ENCODE measurements at regions of chr22 and their contacts with region 1.

Region 1: GRCh38 chr22:35350539-35351503 is 30.1 kb upstream of the HMOX1 start:
- DNase-seq: peak; percentile 93
- CTCF ChIP-seq: peak; percentile 90

Region 2: DNA sequence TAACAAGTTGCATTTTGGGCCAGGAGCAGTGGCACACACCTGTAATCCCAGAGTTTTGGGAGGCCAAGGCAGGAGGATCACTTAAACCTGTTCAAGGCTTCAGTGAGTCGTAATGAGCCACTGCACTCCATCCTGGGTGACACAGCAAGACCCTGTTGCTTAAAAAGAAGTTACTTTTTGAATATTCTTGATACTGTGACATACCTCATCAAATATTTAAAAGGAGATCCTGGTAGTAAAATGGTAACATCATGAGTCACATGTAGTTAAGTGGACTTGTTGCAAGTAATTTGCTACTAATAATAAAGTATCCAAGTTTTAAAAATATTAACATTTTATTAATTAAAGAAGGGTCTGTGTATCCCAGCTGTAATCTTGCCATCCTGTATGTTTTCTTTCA is 75.2 kb before region 1 on chr22:
- CTCF ChIA-PET with region 1: no interaction called
- POLR2A ChIA-PET with region 1: no interaction called
- DNase-seq: no peak
- CTCF ChIP-seq: no peak

Region 3: DNA sequence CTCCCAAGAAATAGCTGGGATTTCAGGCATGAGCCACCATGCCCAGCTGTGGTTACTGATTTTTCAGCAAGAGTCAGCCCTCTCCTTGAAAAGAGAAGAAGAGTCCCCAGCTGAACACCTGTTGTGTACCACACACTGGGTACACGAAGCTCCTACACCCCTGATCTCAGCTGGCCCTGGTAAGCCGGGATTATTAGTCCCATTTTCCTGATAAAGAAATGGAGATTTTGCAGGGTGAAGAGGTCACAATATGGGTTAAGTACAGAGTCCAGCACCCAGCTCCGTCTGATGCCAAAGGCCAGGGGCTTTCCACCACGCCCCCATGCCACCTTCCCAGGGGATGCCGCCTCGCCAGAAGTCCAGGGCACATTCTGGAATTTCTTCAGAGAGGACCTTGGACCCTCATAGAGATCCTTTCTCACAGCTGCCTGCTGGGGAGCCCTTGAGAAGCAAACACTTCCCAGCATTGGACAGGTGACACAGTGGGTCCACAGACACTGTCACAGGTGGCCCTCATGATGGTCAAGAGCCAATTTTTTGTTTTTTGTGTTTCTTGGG is 10.3 kb after region 1 on chr22:
- CTCF ChIA-PET with region 1: interaction called, 13 read pairs
- POLR2A ChIA-PET with region 1: no interaction called
- DNase-seq: no peak
- CTCF ChIP-seq: no peak

Region 4: DNA sequence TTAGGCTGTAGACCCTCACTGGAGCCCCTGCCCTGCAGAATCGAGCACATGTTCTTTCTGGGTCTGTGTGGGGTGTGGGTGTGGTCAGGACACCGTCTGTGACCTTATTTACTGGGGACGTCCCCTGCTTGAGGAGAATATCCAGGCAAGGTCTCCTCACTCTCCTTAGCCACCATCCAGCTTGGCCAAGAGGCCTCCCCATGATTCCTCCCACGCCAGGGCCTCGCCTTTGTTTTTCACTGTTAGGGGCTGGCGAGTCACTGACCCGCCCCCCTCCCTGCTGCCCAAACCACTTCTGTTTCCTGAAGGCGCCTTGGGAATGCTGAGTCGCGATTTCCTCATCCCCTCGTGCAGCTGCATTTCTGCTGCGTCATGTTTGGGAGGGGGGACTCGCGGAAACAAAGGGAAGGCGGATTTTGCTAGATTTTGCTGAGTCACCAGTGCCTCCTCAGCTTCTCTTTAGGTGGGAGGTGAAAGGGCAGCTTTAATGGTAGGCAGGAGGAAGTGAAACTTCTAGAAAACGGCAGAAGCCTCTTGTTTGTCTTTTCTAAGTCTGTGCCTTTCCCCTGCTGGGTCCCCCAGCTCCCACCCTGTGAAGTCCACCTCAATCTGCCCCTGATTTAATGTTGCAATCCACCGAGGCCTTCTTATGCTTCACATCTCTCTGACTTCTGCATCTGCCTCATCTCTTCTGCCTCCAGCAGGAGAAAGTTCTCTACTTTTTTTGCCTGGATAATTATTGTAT is 26.1 kb after region 1 on chr22:
- CTCF ChIA-PET with region 1: interaction called, 10 read pairs
- POLR2A ChIA-PET with region 1: no interaction called
- DNase-seq: peak; percentile 81
- CTCF ChIP-seq: no peak

Region 5: GRCh38 chr22:35409783-35410662 is 59.2 kb after region 1 on chr22:
- CTCF ChIA-PET with region 1: interaction called, 47 read pairs
- POLR2A ChIA-PET with region 1: no interaction called
- DNase-seq: peak; percentile 86
- CTCF ChIP-seq: no peak

Region 6: GRCh38 chr22:35442471-35442870 is 91.7 kb after region 1 on chr22:
- CTCF ChIA-PET with region 1: no interaction called
- POLR2A ChIA-PET with region 1: no interaction called
- DNase-seq: no peak
- CTCF ChIP-seq: no peak

Region 7: GRCh38 chr22:35575116-35575748 is 224.4 kb after region 1 on chr22:
- CTCF ChIA-PET with region 1: interaction called, 76 read pairs
- POLR2A ChIA-PET with region 1: no interaction called
- DNase-seq: peak; percentile 46
- CTCF ChIP-seq: no peak

Region 8: GRCh38 chr22:35582861-35583670 is 232.2 kb after region 1 on chr22:
- CTCF ChIA-PET with region 1: interaction called, 76 read pairs
- POLR2A ChIA-PET with region 1: no interaction called
- DNase-seq: peak; percentile 88
- CTCF ChIP-seq: peak; percentile 89

Region 9: GRCh38 chr22:35622191-35622913 is 271.5 kb after region 1 on chr22:
- CTCF ChIA-PET with region 1: interaction called, 19 read pairs
- POLR2A ChIA-PET with region 1: no interaction called
- DNase-seq: no peak
- CTCF ChIP-seq: no peak

Measured in GM10248 (cell line).